ENCODE measurements at regions of chr21 and their contacts with region 1.

Region 1: DNA sequence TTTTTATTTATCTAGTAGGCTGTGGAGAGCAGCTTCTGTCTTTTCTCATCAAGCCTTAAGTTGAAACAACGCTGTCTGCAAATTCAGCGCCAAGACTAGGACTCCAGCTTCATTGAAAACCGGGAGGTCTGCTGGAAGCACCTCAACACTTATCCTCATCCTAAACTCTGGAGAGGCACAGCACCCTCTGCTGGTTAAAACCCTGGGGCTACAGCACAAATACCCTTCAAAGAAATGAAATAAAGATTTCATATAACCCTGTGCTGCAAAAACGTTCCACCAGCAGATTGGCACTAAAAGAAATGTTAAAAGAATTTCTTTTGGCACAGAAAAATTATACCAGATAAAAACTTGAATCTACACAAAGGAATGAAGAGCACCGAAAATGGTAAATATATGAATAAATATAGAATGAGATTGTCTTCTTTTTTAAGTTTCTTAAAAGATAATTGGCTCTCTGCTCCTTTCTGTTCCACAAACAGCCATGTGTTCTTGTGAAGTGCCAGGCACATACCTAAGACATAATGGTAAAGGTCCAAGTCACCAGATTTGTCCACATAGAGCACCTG is 227.7 kb upstream of the SAMSN1 start:
- DNase-seq: peak; percentile 79
- ATAC-seq: peak; percentile 47
- H3K4me3 Mint-ChIP-seq: no peak overlapping the region
- H3K27ac Mint-ChIP-seq: no peak overlapping the region
- H3K4me1 Mint-ChIP-seq: no peaks in the 10 kb centered on the region
- H3K27me3 Mint-ChIP-seq: peaks cover 8% of the 10 kb centered on the region
- CTCF ChIP-seq: peak; percentile 78

Region 2: GRCh38 chr21:14403681-14404318 is 370.1 kb before region 1 on chr21:
- CTCF ChIA-PET with region 1: interaction called, 4 read pairs
- POLR2A ChIA-PET with region 1: no interaction called
- intact Hi-C with region 1: loop called (anchors 10 kb)
- DNase-seq: no peak
- ATAC-seq: peak; percentile 61
- H3K4me3 Mint-ChIP-seq: no peak overlapping the region
- H3K27ac Mint-ChIP-seq: no peak overlapping the region
- H3K4me1 Mint-ChIP-seq: no peaks in the 10 kb centered on the region
- H3K27me3 Mint-ChIP-seq: no peaks in the 10 kb centered on the region
- CTCF ChIP-seq: peak; percentile 85

Region 3: DNA sequence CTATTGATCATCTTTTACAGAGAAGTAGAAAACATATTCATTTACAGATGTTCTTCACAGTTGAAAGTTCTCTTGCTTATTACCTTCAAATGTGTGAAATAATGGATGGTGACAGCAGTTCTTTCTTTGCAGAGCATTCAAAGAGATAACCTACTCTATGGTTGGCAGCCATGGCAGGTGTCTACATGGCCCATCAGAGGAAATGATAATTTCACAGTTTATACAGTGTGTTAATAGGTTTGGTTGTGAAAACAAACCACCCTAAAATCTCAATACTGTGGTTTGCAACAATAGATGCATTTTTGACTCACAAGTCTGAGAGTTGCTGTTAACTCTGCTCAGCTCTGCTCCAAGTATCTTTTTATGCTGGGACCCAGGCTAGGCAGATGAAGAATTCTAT is 13.5 kb after region 1 on chr21:
- CTCF ChIA-PET with region 1: no interaction called
- POLR2A ChIA-PET with region 1: no interaction called
- intact Hi-C with region 1: no loop called
- DNase-seq: no peak
- ATAC-seq: no peak
- H3K4me3 Mint-ChIP-seq: no peak overlapping the region
- H3K27ac Mint-ChIP-seq: no peak overlapping the region
- H3K4me1 Mint-ChIP-seq: no peaks in the 10 kb centered on the region
- H3K27me3 Mint-ChIP-seq: no peaks in the 10 kb centered on the region
- CTCF ChIP-seq: no peak

Measured in activated CD8-positive, alpha-beta T cell treated with anti-CD3 and anti-CD28 coated beads for 36 hours (primary cell).